Sigmoid colon (tissue), 7 donors: ENCODE measurements at regions of chr9 and their contacts with region 1.

Region 1: DNA sequence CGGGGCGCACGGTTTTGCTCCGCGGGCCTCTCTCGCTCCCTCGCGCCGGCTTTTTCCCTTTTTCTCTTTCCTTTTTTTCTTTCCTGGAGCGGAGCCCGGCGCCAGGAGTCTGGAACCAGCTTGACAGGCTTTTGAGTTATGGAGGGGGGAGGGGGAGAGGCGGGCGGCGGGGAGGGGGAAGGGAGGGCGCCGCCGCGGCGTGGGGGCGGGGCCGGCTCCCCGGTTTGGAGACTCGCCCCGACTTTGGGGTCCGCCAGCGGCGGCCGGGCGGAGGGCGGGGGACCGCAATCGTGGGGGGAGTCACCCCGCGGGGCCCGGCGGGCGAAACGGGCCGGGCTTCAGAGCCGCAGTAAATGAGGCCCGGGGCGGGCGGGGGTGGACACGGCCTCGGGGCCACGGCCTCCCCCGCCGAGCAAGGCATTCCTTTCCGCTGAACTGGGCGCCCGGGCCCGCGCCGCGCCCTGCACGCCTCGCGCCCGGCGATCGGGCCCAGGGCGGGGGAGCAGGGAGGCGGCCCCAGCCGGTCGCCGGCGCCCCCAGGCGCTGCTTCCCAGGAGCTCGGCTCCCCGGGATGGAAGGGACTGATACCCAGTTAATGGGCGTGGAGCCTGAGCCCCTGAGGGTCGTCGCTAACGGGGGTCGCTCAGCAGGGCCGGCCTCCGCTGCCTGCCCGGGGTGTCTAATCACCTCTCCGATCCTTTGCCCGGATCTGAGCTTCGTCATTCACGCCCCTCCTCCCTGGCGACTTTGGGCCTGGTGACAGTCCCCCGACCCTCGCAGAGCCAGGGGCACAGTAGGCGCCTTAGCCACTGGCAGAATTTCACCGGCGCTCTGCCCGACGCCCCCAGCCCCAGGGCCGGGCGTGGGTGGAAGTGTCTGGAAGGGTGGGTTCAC is 138.1 kb downstream of the C9orf50 start:
- DNase-seq: peak; percentile 96
- H3K4me3 ChIP-seq: peak overlapping the region; percentile 41 to 67 (median 63)
- H3K27ac ChIP-seq: peak overlapping the region; percentile 99 to 100 (median 99)
- H3K4me1 ChIP-seq: peaks cover 0 to 84% (median 79%) of the 10 kb centered on the region in 4 donors
- H3K27me3 ChIP-seq: no peaks in the 10 kb centered on the region
- CTCF ChIP-seq: no peak
- EP300 ChIP-seq: peak in 1 of 4 donors; percentile 22
- POLR2A ChIP-seq: peak in 1 of 2 donors; percentile 7

Region 2: DNA sequence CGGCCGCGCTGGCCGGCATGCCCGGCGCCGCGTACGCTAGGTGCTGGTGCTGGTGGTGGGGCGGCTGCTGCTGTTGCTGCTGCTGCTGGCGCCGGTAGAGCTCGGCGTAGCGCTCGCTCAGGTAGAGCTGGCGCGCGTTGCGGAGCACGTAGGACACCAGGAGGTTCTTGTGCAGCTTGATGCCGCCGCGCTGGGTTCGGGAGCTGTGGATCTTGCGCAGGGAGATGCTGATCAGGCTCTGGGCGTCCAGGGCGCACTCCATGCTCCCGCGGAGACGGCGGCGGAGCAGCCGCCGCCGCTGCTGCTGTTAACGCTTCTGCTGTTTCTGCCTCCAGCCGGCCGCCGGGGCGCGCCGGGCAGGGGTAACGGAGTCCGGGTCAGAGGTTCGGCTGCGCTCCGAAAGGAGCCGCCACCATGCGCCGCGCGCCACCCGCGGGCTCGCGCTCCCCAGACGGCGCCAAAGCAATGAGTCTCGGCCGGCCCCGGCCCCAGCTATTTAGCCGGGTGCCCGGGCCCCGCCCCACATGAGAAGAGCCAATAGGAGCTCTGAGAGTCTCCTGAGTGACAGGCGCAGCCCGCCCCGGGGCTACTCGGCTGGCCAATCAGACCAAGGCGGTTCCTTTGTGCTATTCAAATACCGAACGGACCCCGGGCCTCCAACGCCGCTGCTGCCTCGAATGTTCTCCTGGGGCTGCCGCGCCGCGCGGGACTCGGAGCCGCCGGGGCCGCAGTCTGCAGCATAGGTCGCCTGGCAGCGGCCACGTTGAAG is 304.8 kb before region 1 on chr9 and contains the start of gene IER5L:
- intact Hi-C with region 1: loop called (anchors 2 kb)
- DNase-seq: peak; percentile 99
- H3K4me3 ChIP-seq: peak within 1 kb of the TSS; percentile 80 to 96 (median 93)
- H3K27ac ChIP-seq: peak within 1 kb of the TSS; percentile 97 to 99 (median 98)
- H3K4me1 ChIP-seq: peaks cover 0 to 34% (median 23%) of the 10 kb centered on the region in 4 donors
- H3K27me3 ChIP-seq: no peaks in the 10 kb centered on the region
- CTCF ChIP-seq: no peak
- EP300 ChIP-seq: no peak
- POLR2A ChIP-seq: peak; percentile 88 to 95
- total RNA-seq, gene IER5L: 4.4 to 17.4 (median 10.2) TPM

Region 3: DNA sequence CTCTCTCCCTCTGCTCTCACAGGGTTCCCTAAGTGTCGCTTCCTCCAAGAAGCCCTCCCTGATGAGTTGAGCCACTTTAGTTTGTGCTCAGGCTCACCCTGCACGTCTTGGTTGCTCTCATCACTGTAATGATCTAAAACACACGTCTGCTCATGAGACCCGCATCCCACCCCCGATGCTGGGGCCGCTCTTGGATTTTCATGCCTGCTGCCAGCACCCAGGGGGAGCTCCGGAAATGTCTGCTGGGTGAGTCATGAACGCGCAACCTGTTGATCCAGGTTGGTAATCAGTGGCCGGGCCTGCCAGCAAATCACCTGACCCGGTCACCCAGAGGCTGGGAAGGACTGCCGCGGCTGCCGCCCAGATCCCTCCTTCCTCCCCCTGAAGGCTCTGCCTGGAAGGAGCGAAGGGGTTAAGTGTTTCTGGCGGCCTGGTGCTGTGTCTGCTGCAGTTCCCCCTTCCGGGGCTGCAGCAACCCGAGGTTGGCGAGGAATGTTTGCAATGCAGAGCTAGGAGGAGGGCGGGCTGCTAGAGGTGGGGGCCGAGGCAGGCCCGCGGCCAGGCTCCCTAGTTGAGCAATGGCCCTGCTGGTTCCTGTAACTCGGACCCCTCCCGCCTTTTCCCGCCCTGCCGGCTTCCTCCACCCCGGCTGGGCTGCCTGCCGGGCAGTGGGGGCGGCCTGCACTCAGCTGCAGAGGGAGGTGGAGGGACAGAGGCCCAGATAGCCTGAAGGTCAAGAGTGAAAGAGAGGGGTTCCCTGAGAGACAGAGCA is 148.6 kb before region 1 on chr9:
- intact Hi-C with region 1: loop called (anchors 2 kb)
- DNase-seq: peak; percentile 96
- H3K4me3 ChIP-seq: peak overlapping the region in 3 of 4 donors; percentile 20 to 29 (median 23)
- H3K27ac ChIP-seq: peak overlapping the region; percentile 84 to 89 (median 87)
- H3K4me1 ChIP-seq: peaks cover 0 to 51% (median 40%) of the 10 kb centered on the region in 4 donors
- H3K27me3 ChIP-seq: no peaks in the 10 kb centered on the region
- CTCF ChIP-seq: no peak
- EP300 ChIP-seq: peak in 3 of 4 donors; percentile 5 to 65 (median 15)
- POLR2A ChIP-seq: no peak

Region 4: GRCh38 chr9:129413537-129414376 is 69.0 kb before region 1 on chr9:
- intact Hi-C with region 1: loop called (anchors 2 kb)
- DNase-seq: peak; percentile 99
- H3K4me3 ChIP-seq: peak overlapping the region; percentile 49 to 63 (median 57)
- H3K27ac ChIP-seq: peak overlapping the region; percentile 94 to 100 (median 98)
- H3K4me1 ChIP-seq: peaks cover 0 to 38% (median 32%) of the 10 kb centered on the region in 4 donors
- H3K27me3 ChIP-seq: no peaks in the 10 kb centered on the region
- CTCF ChIP-seq: no peak
- EP300 ChIP-seq: peak in 2 of 4 donors; percentile 41 to 91
- POLR2A ChIP-seq: peak; percentile 74 to 81

Region 5: GRCh38 chr9:129513282-129513681 is 30.5 kb after region 1 on chr9:
- intact Hi-C with region 1: no loop called
- DNase-seq: peak; percentile 2
- H3K4me3 ChIP-seq: no peak overlapping the region
- H3K27ac ChIP-seq: no peak overlapping the region
- H3K4me1 ChIP-seq: no peaks in the 10 kb centered on the region
- H3K27me3 ChIP-seq: no peaks in the 10 kb centered on the region
- CTCF ChIP-seq: no peak
- EP300 ChIP-seq: no peak
- POLR2A ChIP-seq: no peak